Heart left ventricle (tissue), 16 donors: ENCODE measurements at regions of chr2 and their contacts with region 1.

Region 1: GRCh38 chr2:148965623-148966437 is 72.7 kb upstream of the LYPD6B start:
- DNase-seq: no peak
- ATAC-seq: no peak
- H3K4me3 ChIP-seq: no peak overlapping the region
- H3K27ac ChIP-seq: no peak overlapping the region
- H3K4me1 ChIP-seq: no peaks in the 10 kb centered on the region
- H3K27me3 ChIP-seq: no peaks in the 10 kb centered on the region
- CTCF ChIP-seq: no peak
- POLR2A ChIP-seq: no peak

Region 2: GRCh38 chr2:148888003-148888501 is 77.8 kb before region 1 on chr2:
- intact Hi-C with region 1: no loop called
- DNase-seq: no peak
- ATAC-seq: no peak
- H3K4me3 ChIP-seq: peak overlapping the region; percentile 20 to 57 (median 46)
- H3K27ac ChIP-seq: no peak overlapping the region
- H3K4me1 ChIP-seq: peaks cover 0 to 12% (median 7%) of the 10 kb centered on the region in 12 donors
- H3K27me3 ChIP-seq: peaks cover 0 to 45% (median 20%) of the 10 kb centered on the region in 9 donors
- CTCF ChIP-seq: peak in 1 of 12 donors; percentile 12
- POLR2A ChIP-seq: no peak

Region 3: GRCh38 chr2:148901142-148901541 is 64.7 kb before region 1 on chr2:
- intact Hi-C with region 1: loop called in 1 of 10 experiments (anchors 2 kb)
- DNase-seq: no peak
- ATAC-seq: no peak
- H3K4me3 ChIP-seq: no peak overlapping the region
- H3K27ac ChIP-seq: no peak overlapping the region
- H3K4me1 ChIP-seq: no peaks in the 10 kb centered on the region
- H3K27me3 ChIP-seq: peaks cover 0 to 5% (median 0%) of the 10 kb centered on the region in 9 donors
- CTCF ChIP-seq: no peak
- POLR2A ChIP-seq: no peak

Region 4: GRCh38 chr2:148914463-148914862 is 51.4 kb before region 1 on chr2:
- intact Hi-C with region 1: no loop called
- DNase-seq: no peak
- ATAC-seq: no peak
- H3K4me3 ChIP-seq: no peak overlapping the region
- H3K27ac ChIP-seq: no peak overlapping the region
- H3K4me1 ChIP-seq: no peaks in the 10 kb centered on the region
- H3K27me3 ChIP-seq: no peaks in the 10 kb centered on the region
- CTCF ChIP-seq: no peak
- POLR2A ChIP-seq: no peak

Region 5: DNA sequence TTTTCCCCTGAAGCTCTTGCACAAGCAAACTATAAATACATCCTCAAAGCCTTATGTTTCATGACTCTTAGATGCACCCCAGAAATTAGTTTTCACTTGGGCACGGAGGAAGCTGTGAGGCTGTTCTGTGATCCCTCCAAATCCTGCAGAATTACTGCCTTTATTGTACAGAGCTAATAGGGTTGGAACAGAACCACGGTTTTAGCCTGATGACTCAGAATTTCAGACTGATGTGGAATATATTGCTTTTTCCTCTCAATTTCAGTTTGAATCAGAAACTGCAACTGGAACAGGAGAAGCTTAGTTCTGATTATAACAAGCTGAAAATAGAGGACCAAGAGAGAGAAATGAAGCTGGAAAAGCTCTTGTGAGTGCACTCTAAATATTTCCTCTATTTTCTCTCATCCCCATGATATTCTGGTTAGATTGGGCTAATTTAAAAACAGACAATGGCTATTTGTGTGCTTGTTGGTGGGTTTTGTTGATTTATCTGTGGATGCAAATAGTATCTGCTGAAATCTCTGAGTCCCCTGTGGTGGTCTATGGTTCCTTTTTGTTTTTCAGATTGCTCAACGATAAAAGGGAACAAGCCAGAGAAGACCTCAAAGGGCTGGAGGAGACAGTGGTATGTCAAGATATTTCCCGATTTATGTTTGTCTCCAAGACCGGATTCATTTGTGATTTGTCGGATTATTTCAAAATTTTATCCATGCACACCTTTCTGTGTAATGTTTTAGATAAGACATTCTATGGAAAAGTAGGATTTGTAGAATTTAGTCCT is 34.5 kb after region 1 on chr2:
- intact Hi-C with region 1: loop called in 1 of 10 experiments (anchors 2 kb)
- DNase-seq: no peak
- ATAC-seq: no peak
- H3K4me3 ChIP-seq: no peak overlapping the region
- H3K27ac ChIP-seq: no peak overlapping the region
- H3K4me1 ChIP-seq: peaks cover 0 to 7% (median 0%) of the 10 kb centered on the region in 12 donors
- H3K27me3 ChIP-seq: peaks cover 0 to 14% (median 0%) of the 10 kb centered on the region in 9 donors
- CTCF ChIP-seq: no peak
- POLR2A ChIP-seq: no peak